ENCODE measurements at regions of chr9 and their contacts with region 1.

Region 1: GRCh38 chr9:91495450-91495849 is 71.8 kb upstream of the NFIL3 start:
- DNase-seq: peak; percentile 64
- ATAC-seq: peak; percentile 48
- H3K4me3 ChIP-seq: no peak overlapping the region
- H3K27ac ChIP-seq: no peak overlapping the region
- H3K4me1 ChIP-seq: peaks cover 17% of the 10 kb centered on the region
- H3K27me3 ChIP-seq: no peaks in the 10 kb centered on the region
- CTCF ChIP-seq: no peak

Region 2: GRCh38 chr9:91558879-91559278 is 63.4 kb after region 1 on chr9:
- CTCF ChIA-PET with region 1: no interaction called
- POLR2A ChIA-PET with region 1: no interaction called
- intact Hi-C with region 1: loop called (anchors 2 kb)
- DNase-seq: no peak
- ATAC-seq: no peak
- H3K4me3 ChIP-seq: no peak overlapping the region
- H3K27ac ChIP-seq: no peak overlapping the region
- H3K4me1 ChIP-seq: no peaks in the 10 kb centered on the region
- H3K27me3 ChIP-seq: no peaks in the 10 kb centered on the region
- CTCF ChIP-seq: peak; percentile 21; the same call in 1 of the 2 replicates

Measured in PC-3 (cell line).